ENCODE measurements at regions of chr1 and their contacts with region 1.

Region 1: GRCh38 chr1:154479764-154480421 is 22.1 kb upstream of the TDRD10 start:
- DNase-seq: peak; percentile 92
- H3K4me3 Mint-ChIP-seq: no peak overlapping the region
- H3K27ac Mint-ChIP-seq: no peak overlapping the region
- H3K4me1 Mint-ChIP-seq: peaks cover 23% of the 10 kb centered on the region
- H3K27me3 Mint-ChIP-seq: no peaks in the 10 kb centered on the region
- CTCF ChIP-seq: peak; percentile 98

Region 2: GRCh38 chr1:154272217-154272998 is 207.5 kb before region 1 on chr1 and contains the start of gene HAX1:
- CTCF ChIA-PET with region 1: interaction called, 5 read pairs
- POLR2A ChIA-PET with region 1: no interaction called
- intact Hi-C with region 1: loop called (anchors 1 kb)
- DNase-seq: peak; percentile 98
- H3K4me3 Mint-ChIP-seq: peak within 1 kb of the TSS; percentile 91
- H3K27ac Mint-ChIP-seq: peak within 1 kb of the TSS; percentile 96
- H3K4me1 Mint-ChIP-seq: peaks cover 29% of the 10 kb centered on the region
- H3K27me3 Mint-ChIP-seq: no peaks in the 10 kb centered on the region
- CTCF ChIP-seq: peak; percentile 96
- total RNA-seq, gene HAX1: 261 and 295 TPM in 2 replicates

Region 3: DNA sequence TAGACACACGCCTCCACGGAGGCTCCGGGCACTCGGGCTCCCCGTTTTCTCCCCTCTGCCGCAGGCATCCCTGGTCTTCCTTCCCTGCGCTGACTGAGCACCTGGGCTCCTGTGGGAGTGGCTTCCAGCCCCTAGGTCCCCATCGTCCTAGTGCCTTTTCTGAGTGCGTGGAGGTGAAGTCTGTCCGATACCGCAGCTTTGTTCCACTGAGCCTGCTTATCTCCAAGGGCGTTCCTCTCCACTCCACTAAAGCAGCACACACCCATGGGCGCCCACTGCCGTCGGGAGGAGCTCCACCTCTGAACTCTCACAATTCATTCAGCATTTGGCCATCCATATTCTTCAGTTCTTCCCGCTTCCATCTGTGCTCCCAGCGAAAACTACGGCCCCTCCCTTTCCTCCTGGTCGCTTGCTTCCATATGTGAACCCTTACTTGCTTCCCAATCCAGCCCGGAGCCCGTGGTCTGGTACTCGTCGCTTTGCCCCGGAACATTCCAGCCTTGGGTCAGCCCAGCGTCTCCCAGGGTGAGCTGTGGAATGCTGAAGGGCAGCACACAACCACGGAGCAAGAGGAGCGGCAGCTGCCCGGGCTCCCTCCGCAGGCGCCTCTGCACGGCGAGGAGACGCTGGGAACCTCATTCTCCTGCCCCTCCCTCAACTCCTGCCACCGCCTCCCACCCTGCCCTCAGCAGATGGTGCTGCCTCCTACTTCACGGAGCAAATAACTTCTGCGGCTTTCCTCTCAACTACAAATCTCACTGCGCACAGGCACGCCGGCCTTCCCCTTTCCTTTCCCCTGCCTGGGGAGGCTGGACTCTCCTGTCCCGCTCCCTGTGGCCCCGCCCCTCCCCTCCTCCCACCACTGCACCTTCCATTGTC is 127.1 kb before region 1 on chr1:
- CTCF ChIA-PET with region 1: no interaction called
- POLR2A ChIA-PET with region 1: no interaction called
- intact Hi-C with region 1: loop called (anchors 5 kb)
- DNase-seq: no peak
- H3K4me3 Mint-ChIP-seq: peak overlapping the region; percentile 12
- H3K27ac Mint-ChIP-seq: no peak overlapping the region
- H3K4me1 Mint-ChIP-seq: peaks cover 19% of the 10 kb centered on the region
- H3K27me3 Mint-ChIP-seq: peaks cover 13% of the 10 kb centered on the region
- CTCF ChIP-seq: no peak

Region 4: DNA sequence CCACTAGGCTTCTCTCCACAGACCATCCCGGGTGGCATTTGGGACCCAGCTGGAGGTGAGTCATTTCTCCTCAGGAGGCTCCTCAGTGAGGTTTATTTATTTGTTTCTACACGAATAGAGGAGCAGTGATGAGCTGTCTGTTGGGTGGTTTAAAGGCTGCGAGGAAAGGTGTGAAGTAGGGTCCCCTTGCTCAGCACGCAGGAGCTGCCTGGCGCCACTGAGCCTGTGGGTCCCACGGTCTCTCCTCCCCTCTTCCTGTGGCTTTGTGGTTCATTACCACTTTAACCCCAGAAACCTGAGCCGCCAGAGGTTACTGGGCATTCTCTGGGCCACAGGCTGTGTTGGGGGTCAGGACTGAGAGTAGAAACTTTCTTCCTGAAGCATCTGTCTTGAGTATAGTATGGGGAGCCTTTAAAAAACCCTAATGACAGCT is 34.8 kb before region 1 on chr1:
- CTCF ChIA-PET with region 1: no interaction called
- POLR2A ChIA-PET with region 1: no interaction called
- intact Hi-C with region 1: no loop called
- DNase-seq: peak; percentile 65
- H3K4me3 Mint-ChIP-seq: no peak overlapping the region
- H3K27ac Mint-ChIP-seq: no peak overlapping the region
- H3K4me1 Mint-ChIP-seq: peaks cover 34% of the 10 kb centered on the region
- H3K27me3 Mint-ChIP-seq: no peaks in the 10 kb centered on the region
- CTCF ChIP-seq: no peak

Region 5: DNA sequence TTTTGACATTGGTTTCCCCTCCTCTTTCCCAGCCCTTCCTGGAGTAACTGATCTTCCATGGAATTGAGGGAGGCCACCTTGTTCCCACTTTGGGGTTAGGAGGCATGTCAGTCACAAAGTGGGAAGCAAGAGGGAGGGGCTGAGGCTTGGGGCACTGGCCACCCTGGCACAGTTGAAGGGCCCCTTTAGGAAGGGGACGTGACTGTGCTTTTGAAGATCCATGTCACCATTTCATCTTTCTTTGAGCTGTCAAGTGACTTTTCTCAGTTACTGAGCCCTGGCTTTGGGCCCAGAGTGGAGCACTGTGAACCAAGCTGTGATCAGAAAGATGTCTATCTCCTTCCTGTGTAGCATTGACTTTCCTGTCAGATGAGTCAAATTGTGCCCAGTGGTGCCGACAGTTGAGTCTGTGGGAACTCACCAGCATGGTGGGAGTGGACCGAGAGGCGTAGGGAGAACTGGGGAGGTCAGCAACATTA is 16.3 kb before region 1 on chr1:
- CTCF ChIA-PET with region 1: interaction called, 12 read pairs
- POLR2A ChIA-PET with region 1: no interaction called
- intact Hi-C with region 1: no loop called
- DNase-seq: no peak
- H3K4me3 Mint-ChIP-seq: no peak overlapping the region
- H3K27ac Mint-ChIP-seq: peak overlapping the region; percentile 35
- H3K4me1 Mint-ChIP-seq: no peaks in the 10 kb centered on the region
- H3K27me3 Mint-ChIP-seq: no peaks in the 10 kb centered on the region
- CTCF ChIP-seq: no peak

Region 6: DNA sequence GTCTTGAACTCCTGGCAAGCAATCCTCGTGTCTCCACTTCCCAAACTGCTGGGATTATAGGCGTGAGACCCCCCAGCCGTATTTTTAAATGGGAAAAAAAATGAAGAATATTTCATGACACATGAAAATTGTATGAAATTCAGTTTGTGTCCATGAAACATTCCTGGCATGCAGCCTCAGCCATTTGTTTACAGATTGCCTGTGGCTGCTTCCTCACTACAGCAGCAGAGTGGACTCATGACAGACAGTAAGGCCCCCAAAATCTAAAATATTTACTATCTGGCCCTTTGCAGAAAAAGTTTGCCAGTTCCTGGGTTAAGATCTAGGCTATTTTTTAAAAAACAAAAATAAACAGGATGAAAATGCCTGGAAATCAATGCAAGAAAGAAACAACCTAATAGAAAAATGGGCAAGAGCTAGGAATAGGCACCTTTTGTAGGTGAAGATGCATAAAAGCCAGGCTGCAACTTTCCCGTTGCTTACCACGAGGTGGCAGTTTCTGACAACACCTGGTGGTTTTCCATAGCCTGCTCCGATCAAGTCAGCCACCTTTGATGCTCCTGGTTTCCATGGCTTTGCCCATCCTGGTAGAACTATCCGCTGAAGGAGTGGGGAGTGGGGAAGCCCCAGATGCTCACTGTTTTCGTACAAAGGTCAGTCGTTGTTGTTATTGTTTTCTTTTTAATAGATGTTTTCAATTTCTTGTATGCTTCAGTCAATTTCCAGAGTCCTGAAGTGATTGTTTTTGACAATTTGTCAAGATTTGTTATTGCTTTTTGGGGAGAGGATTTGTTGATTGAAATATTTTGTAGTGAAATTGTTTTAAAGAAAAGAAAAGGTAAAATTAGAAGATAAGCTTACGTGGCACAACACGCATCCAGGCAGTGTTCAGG is 54.3 kb after region 1 on chr1:
- CTCF ChIA-PET with region 1: interaction called, 20 read pairs
- POLR2A ChIA-PET with region 1: interaction called, 5 read pairs
- intact Hi-C with region 1: no loop called
- DNase-seq: peak; percentile 76
- H3K4me3 Mint-ChIP-seq: no peak overlapping the region
- H3K27ac Mint-ChIP-seq: no peak overlapping the region
- H3K4me1 Mint-ChIP-seq: no peaks in the 10 kb centered on the region
- H3K27me3 Mint-ChIP-seq: peaks cover 40% of the 10 kb centered on the region
- CTCF ChIP-seq: peak; percentile 81

Region 7: DNA sequence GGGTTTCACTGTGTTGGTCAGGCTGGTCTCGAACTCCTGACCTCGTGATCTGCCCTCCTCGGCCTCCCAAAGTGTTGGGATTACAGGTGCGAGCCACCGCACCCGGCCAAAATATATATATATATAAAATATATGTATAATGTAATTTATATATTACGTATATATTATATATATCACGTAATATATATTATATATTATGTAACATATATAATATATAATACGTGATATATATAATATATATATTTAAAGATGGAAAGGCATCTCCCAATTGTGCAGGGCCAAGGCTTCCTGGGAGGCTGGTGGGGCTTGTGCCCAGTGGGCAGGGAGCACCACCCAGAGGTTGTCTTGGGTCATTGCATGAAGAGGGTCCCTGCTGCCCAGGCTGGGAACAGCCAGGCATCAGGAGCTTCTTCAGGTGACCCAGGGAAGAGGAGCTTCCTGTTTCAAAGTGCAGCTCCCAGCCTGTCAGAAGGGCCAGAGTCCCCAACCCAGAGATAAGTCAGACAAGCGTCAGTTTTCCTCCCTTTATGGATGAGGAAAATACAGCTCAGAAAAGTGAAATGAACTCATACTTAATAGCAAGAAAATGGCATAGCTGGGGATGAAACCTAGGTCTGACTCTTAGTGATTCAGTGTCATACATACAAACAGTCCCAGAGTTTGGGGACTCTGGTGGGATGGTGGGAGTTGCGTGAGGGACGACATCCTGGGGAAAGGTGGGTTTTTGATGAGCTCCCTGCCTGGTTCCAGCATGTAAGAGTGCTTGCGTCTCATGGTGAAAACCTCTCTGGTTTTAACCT is 66.6 kb after region 1 on chr1:
- CTCF ChIA-PET with region 1: interaction called, 128 read pairs
- POLR2A ChIA-PET with region 1: interaction called, 22 read pairs
- intact Hi-C with region 1: loop called (anchors 1 kb)
- DNase-seq: peak; percentile 83
- H3K4me3 Mint-ChIP-seq: no peak overlapping the region
- H3K27ac Mint-ChIP-seq: no peak overlapping the region
- H3K4me1 Mint-ChIP-seq: peaks cover 10% of the 10 kb centered on the region
- H3K27me3 Mint-ChIP-seq: peaks cover 30% of the 10 kb centered on the region
- CTCF ChIP-seq: peak; percentile 87

Region 8: GRCh38 chr1:154639876-154640275 is 160.0 kb after region 1 on chr1:
- CTCF ChIA-PET with region 1: no interaction called
- POLR2A ChIA-PET with region 1: no interaction called
- intact Hi-C with region 1: no loop called
- DNase-seq: no peak
- H3K4me3 Mint-ChIP-seq: no peak overlapping the region
- H3K27ac Mint-ChIP-seq: no peak overlapping the region
- H3K4me1 Mint-ChIP-seq: no peaks in the 10 kb centered on the region
- H3K27me3 Mint-ChIP-seq: peaks cover 66% of the 10 kb centered on the region
- CTCF ChIP-seq: no peak

Region 9: GRCh38 chr1:154703170-154703569 is 223.3 kb after region 1 on chr1:
- CTCF ChIA-PET with region 1: no interaction called
- POLR2A ChIA-PET with region 1: no interaction called
- intact Hi-C with region 1: no loop called
- DNase-seq: peak; percentile 21
- H3K4me3 Mint-ChIP-seq: no peak overlapping the region
- H3K27ac Mint-ChIP-seq: no peak overlapping the region
- H3K4me1 Mint-ChIP-seq: no peaks in the 10 kb centered on the region
- H3K27me3 Mint-ChIP-seq: peaks cover 79% of the 10 kb centered on the region
- CTCF ChIP-seq: no peak

Region 10: GRCh38 chr1:154936555-154937084 is 456.7 kb after region 1 on chr1 and contains the start of gene PMVK:
- CTCF ChIA-PET with region 1: interaction called, 3 read pairs
- POLR2A ChIA-PET with region 1: interaction called, 16 read pairs
- intact Hi-C with region 1: loop called (anchors 2 kb)
- DNase-seq: peak; percentile 99
- H3K4me3 Mint-ChIP-seq: peak within 1 kb of the TSS; percentile 90
- H3K27ac Mint-ChIP-seq: peak within 1 kb of the TSS; percentile 100
- H3K4me1 Mint-ChIP-seq: peaks cover 49% of the 10 kb centered on the region
- H3K27me3 Mint-ChIP-seq: no peaks in the 10 kb centered on the region
- CTCF ChIP-seq: peak; percentile 26
- total RNA-seq, gene PMVK: 57.7 and 68.9 TPM in 2 replicates